ENCODE measurements at regions of chr15 and their contacts with region 1.

Region 1: DNA sequence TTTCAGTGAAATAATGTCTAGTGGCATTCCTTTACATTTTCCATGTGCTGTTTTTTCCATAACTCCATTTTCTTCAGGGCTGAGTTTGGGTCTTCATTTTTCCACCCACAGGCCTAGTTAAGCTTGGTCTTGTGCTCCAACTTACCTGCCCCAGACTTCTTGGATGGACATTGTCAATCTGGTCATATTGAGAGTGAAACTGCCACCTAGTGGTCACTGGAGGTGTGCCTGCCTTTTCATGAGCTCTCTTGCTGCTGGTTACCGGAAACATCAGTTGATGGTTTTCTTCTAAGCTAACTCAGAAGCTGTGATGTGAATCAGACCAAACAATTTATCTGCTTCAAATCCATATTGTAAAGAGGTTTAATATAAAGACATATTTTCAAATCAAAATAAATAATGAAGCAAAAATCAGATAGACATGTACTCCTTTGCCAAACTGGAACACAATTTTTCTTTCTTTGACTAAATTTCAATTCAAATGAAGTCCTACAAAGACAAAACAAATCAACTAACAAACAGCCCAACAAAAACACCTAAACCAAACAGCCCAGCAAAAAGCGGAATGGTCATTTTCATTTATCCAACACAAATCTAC is 135.1 kb upstream of the RASGRP1 start:
- DNase-seq: peak; percentile 40 to 87 (median 71)
- ATAC-seq: peak; percentile 56
- H3K4me3 ChIP-seq: no peak overlapping the region
- H3K4me3 Mint-ChIP-seq: no peak overlapping the region
- H3K27ac ChIP-seq: no peak overlapping the region
- H3K27ac Mint-ChIP-seq: no peak overlapping the region
- H3K4me1 ChIP-seq: peaks cover 46% of the 10 kb centered on the region
- H3K4me1 Mint-ChIP-seq: peaks cover 51% of the 10 kb centered on the region
- H3K27me3 ChIP-seq: no peaks in the 10 kb centered on the region
- H3K27me3 Mint-ChIP-seq: no peaks in the 10 kb centered on the region
- CTCF ChIP-seq: peak; percentile 98

Region 2: GRCh38 chr15:38453971-38454695 is 245.6 kb before region 1 on chr15 and contains the start of gene FAM98B:
- CTCF ChIA-PET with region 1: interaction called, 23 read pairs
- POLR2A ChIA-PET with region 1: interaction called, 13 read pairs
- intact Hi-C with region 1: no loop called
- DNase-seq: peak; percentile 80 to 95 (median 87)
- ATAC-seq: peak; percentile 89
- H3K4me3 ChIP-seq: peak within 1 kb of the TSS; percentile 84 to 87
- H3K4me3 Mint-ChIP-seq: peak within 1 kb of the TSS; percentile 98
- H3K27ac ChIP-seq: peak within 1 kb of the TSS; percentile 79 to 88
- H3K27ac Mint-ChIP-seq: peak within 1 kb of the TSS; percentile 99
- H3K4me1 ChIP-seq: peaks cover 19% of the 10 kb centered on the region
- H3K4me1 Mint-ChIP-seq: peaks cover 39% of the 10 kb centered on the region
- H3K27me3 ChIP-seq: no peaks in the 10 kb centered on the region
- H3K27me3 Mint-ChIP-seq: no peaks in the 10 kb centered on the region
- CTCF ChIP-seq: no peak
- total RNA-seq, gene FAM98B: 18.4 to 19.4 TPM

Region 3: DNA sequence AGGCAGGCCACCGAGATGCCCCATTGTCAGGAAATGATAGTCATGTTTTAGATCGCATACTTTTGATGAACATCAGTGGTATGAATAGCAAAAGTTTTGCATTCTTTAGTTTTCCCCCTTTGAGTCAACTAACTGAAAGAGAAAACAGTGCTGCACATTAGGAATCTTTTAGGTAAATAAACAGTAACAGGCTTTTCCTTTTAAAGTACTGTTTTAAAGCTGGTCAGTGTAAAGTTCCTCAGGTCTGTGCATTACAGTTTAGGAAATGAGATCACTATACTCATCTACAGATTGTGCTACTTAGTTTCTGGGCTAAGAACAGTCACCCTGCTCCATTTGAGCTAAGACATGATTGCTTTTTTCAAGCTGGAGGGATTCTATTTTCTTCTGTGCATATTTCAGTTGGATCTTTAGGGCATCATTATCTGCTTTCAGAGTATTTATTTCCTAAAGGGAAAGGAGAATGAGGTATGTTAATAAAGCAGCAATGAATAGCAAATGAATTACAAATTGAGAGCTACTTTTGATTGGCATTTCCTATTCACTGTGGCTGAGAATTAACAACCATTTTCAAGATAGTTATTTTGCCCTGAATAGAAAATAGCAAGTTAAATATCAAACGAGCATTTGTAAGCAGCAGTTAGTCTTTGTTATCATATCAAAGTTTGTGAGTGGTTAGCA is 209.3 kb before region 1 on chr15:
- CTCF ChIA-PET with region 1: interaction called, 10 read pairs
- POLR2A ChIA-PET with region 1: interaction called, 6 read pairs
- intact Hi-C with region 1: no loop called
- DNase-seq: no peak
- ATAC-seq: no peak
- H3K4me3 ChIP-seq: no peak overlapping the region
- H3K4me3 Mint-ChIP-seq: no peak overlapping the region
- H3K27ac ChIP-seq: peak overlapping the region in 1 of 2 experiments; percentile 17
- H3K27ac Mint-ChIP-seq: peak overlapping the region; percentile 66
- H3K4me1 ChIP-seq: peaks cover 14% of the 10 kb centered on the region
- H3K4me1 Mint-ChIP-seq: peaks cover 36% of the 10 kb centered on the region
- H3K27me3 ChIP-seq: no peaks in the 10 kb centered on the region
- H3K27me3 Mint-ChIP-seq: no peaks in the 10 kb centered on the region
- CTCF ChIP-seq: no peak

Region 4: GRCh38 chr15:38514601-38515000 is 185.1 kb before region 1 on chr15:
- CTCF ChIA-PET with region 1: interaction called, 16 read pairs
- POLR2A ChIA-PET with region 1: no interaction called
- intact Hi-C with region 1: no loop called
- DNase-seq: no peak
- ATAC-seq: no peak
- H3K4me3 ChIP-seq: no peak overlapping the region
- H3K4me3 Mint-ChIP-seq: no peak overlapping the region
- H3K27ac ChIP-seq: no peak overlapping the region
- H3K27ac Mint-ChIP-seq: peak overlapping the region; percentile 57
- H3K4me1 ChIP-seq: no peaks in the 10 kb centered on the region
- H3K4me1 Mint-ChIP-seq: peaks cover 19% of the 10 kb centered on the region
- H3K27me3 ChIP-seq: no peaks in the 10 kb centered on the region
- H3K27me3 Mint-ChIP-seq: no peaks in the 10 kb centered on the region
- CTCF ChIP-seq: no peak

Region 5: GRCh38 chr15:38671675-38672254 is 28.0 kb before region 1 on chr15:
- CTCF ChIA-PET with region 1: interaction called, 17 read pairs
- POLR2A ChIA-PET with region 1: no interaction called
- intact Hi-C with region 1: no loop called
- DNase-seq: peak in 6 of 9 experiments; percentile 39 to 91 (median 64)
- ATAC-seq: peak; percentile 61
- H3K4me3 ChIP-seq: peak overlapping the region in 1 of 2 experiments; percentile 3
- H3K4me3 Mint-ChIP-seq: peak overlapping the region; percentile 61
- H3K27ac ChIP-seq: peak overlapping the region; percentile 70 to 84
- H3K27ac Mint-ChIP-seq: peak overlapping the region; percentile 97
- H3K4me1 ChIP-seq: peaks cover 77% of the 10 kb centered on the region
- H3K4me1 Mint-ChIP-seq: peaks cover 77% of the 10 kb centered on the region
- H3K27me3 ChIP-seq: no peaks in the 10 kb centered on the region
- H3K27me3 Mint-ChIP-seq: no peaks in the 10 kb centered on the region
- CTCF ChIP-seq: no peak

Measured in CD8-positive, alpha-beta T cell (primary cell).